ENCODE measurements at regions of chr6 and their contacts with region 1.

Region 1: DNA sequence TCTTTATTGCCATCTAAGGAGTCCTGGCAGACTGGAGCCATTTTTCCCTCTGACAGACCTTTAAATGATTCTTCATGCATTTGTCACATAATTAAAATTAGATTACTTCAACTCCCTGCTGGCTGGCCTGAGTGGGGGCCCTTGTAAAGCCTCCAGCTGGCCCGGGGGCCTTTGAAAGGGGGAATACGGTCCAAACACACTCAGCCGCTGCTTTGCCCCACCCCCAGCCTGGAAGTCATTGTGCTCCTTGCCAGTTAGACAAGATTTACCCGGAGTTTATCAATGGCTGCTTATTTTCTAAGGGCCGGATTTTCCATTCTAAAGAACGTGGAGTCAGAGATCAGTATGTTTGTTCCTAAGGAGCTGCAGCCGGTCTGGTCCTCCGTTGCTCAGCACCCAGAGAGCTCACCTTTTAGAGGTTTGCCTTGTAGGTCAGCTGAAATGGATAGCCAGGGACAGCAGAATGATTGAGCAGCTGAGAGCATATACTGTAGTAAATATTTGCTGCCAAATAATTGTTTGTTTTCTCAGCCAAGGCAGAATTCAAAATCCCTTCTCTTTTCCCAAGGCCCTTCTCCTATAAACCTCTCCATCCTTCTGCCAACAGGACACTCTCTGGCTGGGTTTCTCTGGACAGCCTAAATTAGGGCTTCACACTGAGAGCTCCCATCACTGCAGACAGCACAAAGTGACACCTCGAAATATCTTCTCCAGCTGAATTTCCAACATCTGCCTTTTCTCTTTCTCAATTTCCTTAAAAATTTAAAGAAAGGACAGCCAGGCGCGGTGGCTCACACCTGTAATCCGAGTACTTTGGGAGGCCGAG is 68.4 kb upstream of the RBM24 start:
- DNase-seq: peak; percentile 24 to 70
- ATAC-seq: peak; percentile 70 to 71
- H3K4me3 ChIP-seq: peak overlapping the region in 2 of 4 donors; percentile 5
- H3K27ac ChIP-seq: peak overlapping the region; percentile 79 to 90 (median 88)
- H3K4me1 ChIP-seq: peaks cover 22 to 29% of the 10 kb centered on the region in 2 donors
- H3K27me3 ChIP-seq: no peaks in the 10 kb centered on the region
- CTCF ChIP-seq: no peak
- POLR2A ChIP-seq: no peak

Region 2: DNA sequence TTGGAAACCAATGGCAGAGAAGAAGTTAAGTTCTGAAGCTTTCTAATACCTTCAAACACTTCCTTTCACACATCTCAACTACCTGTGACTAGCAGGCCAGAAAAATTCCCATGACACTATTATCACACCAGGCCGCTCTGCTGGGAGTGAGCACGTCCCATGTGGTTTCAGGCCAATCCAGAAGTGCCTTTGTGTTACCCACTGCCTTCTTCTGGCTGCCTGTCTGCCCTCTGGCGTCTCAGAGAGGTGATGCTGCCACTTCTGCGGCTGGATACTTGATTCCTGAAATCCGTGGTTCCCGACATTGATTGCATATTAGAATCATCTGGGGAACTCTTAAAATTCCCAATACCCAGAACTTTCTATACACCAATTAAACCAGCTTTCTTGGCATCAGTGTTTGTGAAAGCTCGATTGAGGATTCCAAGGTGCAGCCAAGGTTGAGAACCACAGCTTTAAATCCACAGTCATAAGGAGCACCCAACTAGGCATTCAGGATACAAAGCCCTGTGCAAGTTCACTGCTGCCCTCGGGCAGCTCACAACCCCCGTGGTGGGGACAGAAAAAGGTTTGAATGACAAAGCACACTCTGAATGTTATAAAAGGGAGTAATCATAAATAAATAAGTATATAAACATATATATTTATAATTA is 45.3 kb before region 1 on chr6:
- in situ Hi-C with region 1: no loop called
- intact Hi-C with region 1: loop called (anchors 2 kb)
- DNase-seq: peak; percentile 35 to 81
- ATAC-seq: peak; percentile 43 to 75
- H3K4me3 ChIP-seq: no peak overlapping the region
- H3K27ac ChIP-seq: peak overlapping the region; percentile 80 to 92 (median 90)
- H3K4me1 ChIP-seq: peaks cover 26 to 27% of the 10 kb centered on the region in 2 donors
- H3K27me3 ChIP-seq: no peaks in the 10 kb centered on the region
- CTCF ChIP-seq: peak; percentile 51 to 72 (median 60)
- POLR2A ChIP-seq: peak in 1 of 2 donors; percentile 11

Region 3: DNA sequence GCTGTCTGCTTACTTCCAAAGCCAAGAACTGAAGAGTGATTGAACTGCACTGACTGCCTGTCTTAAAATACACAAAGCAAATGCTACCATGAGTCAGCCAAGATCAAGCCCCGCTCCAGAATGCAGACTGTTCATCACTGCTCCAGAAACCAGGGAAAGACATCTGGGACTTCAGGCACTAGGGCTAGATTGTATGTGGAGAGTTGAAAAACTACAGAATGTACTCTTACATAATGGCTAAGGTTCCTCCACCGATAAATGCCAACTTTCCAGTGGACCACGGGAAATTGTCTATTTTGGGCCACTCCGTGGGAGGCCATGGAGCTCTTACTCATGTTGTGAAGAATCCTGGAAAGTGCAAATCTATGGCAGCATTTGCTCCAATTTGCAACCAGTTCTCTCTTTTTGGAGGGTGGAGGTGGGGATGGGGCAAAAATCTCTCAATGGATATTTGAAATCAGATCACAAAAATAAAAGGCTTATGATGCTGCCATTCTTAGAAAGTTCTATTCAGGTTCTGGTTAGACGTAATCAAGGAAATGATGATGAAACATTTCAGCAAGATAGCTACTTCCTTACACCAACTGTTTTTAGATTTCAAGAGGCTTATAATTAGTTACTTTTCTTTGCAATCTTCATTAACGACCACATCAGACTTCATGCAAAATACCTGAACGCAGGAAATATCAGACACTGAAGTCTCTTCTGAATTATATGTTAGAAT is 168.8 kb after region 1 on chr6:
- in situ Hi-C with region 1: no loop called
- intact Hi-C with region 1: loop called (anchors 5 kb)
- DNase-seq: peak; percentile 56 to 79
- ATAC-seq: peak; percentile 96
- H3K4me3 ChIP-seq: no peak overlapping the region
- H3K27ac ChIP-seq: peak overlapping the region; percentile 85 to 97 (median 88)
- H3K4me1 ChIP-seq: peaks cover 28 to 33% of the 10 kb centered on the region in 2 donors
- H3K27me3 ChIP-seq: no peaks in the 10 kb centered on the region
- CTCF ChIP-seq: no peak
- POLR2A ChIP-seq: no peak

Region 4: DNA sequence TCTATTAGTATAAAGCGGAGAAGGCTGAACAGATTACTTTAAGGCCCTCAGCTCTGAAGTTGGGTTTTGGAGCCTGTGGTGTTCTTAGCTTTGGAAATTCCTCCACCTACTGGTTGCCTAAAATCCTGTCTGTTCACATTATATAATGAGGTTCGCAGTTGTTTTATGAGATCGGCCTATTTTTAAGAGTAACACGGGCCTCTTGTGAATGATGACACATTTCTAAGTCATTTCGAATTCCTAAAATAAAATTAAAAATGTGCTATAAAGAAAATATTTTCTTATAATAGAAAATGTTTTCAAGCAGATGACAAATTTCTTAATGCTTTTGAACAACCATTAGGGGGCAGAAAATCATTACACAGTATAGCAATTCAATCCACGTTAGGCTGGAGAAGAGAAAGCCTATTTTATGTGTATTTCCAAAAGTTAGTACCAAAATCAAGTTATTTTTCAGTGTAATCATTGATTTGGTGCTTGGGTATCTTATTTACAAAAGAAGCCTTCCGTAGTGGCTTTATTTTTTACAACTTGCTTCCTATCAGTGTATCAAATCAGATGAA is 371.6 kb after region 1 on chr6:
- in situ Hi-C with region 1: no loop called
- intact Hi-C with region 1: loop called (anchors 5 kb)
- DNase-seq: peak in 1 of 2 donors; percentile 33
- ATAC-seq: peak; percentile 92 to 93
- H3K4me3 ChIP-seq: peak overlapping the region; percentile 2 to 48 (median 32)
- H3K27ac ChIP-seq: peak overlapping the region; percentile 66 to 85 (median 75)
- H3K4me1 ChIP-seq: peaks cover 7 to 8% of the 10 kb centered on the region in 2 donors
- H3K27me3 ChIP-seq: no peaks in the 10 kb centered on the region
- CTCF ChIP-seq: peak; percentile 78 to 97 (median 86)
- POLR2A ChIP-seq: no peak

Region 5: GRCh38 chr6:17628873-17629272 is 416.1 kb after region 1 on chr6:
- in situ Hi-C with region 1: no loop called
- intact Hi-C with region 1: no loop called
- DNase-seq: no peak
- ATAC-seq: no peak
- H3K4me3 ChIP-seq: no peak overlapping the region
- H3K27ac ChIP-seq: no peak overlapping the region
- H3K4me1 ChIP-seq: peaks cover 0 to 11% of the 10 kb centered on the region in 2 donors
- H3K27me3 ChIP-seq: no peaks in the 10 kb centered on the region
- CTCF ChIP-seq: no peak
- POLR2A ChIP-seq: no peak

Measured in gastrocnemius medialis (tissue), 4 donors.